Common myeloid progenitor, CD34-positive (primary cell): ENCODE measurements at regions of chr14 and their contacts with region 1.

Region 1: GRCh38 chr14:73759714-73760597 is 45.8 kb upstream of the PNMA1 start:
- DNase-seq: peak; percentile 96 to 99 (median 99)
- H3K4me3 ChIP-seq: peak overlapping the region; percentile 66 to 88 (median 77)
- H3K27ac ChIP-seq: peak overlapping the region; percentile 86 to 99
- H3K4me1 ChIP-seq: peaks cover 29 to 84% (median 78%) of the 10 kb centered on the region in 4 experiments
- H3K27me3 ChIP-seq: no peaks in the 10 kb centered on the region

Region 2: DNA sequence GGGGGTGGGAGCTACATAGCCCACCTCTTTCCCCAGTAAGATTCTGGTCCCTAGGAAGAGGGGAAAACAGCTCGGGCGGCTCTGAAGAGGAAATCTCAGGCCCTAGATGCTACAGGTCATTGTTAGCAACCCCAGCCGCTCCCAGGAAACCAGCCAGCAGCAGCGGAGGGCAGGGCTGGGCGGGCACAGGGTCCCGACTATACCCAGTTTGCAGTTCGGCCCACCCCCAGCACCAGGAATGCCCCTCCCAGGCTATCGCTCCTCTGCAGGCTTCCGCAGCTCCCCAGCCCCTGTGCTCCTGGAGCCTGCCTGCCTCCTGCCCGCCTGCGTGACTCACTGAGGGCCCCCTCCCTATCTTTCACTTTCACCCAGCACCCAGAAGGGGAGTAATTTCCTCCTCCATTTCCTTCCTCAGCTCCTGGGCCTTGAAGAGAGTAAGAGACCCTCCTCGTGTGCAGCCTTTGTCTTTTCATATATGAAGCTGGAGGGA is 18.5 kb before region 1 on chr14:
- CTCF ChIA-PET with region 1: interaction called, 225 read pairs
- POLR2A ChIA-PET with region 1: interaction called, 112 read pairs
- DNase-seq: peak; percentile 96 to 99 (median 97)
- H3K4me3 ChIP-seq: peak overlapping the region in 6 of 7 experiments; percentile 38 to 68 (median 55)
- H3K27ac ChIP-seq: peak overlapping the region; percentile 87 to 99
- H3K4me1 ChIP-seq: peaks cover 23 to 78% (median 77%) of the 10 kb centered on the region in 4 experiments
- H3K27me3 ChIP-seq: no peaks in the 10 kb centered on the region

Region 3: GRCh38 chr14:73771848-73772638 is 12.1 kb after region 1 on chr14:
- CTCF ChIA-PET with region 1: interaction called, 32 read pairs
- POLR2A ChIA-PET with region 1: interaction called, 17 read pairs
- DNase-seq: peak; percentile 55 to 88 (median 78)
- H3K4me3 ChIP-seq: peak overlapping the region in 3 of 7 experiments; percentile 13 to 37 (median 26)
- H3K27ac ChIP-seq: peak overlapping the region in 1 of 2 experiments; percentile 75
- H3K4me1 ChIP-seq: peaks cover 20 to 57% (median 42%) of the 10 kb centered on the region in 4 experiments
- H3K27me3 ChIP-seq: no peaks in the 10 kb centered on the region

Region 4: DNA sequence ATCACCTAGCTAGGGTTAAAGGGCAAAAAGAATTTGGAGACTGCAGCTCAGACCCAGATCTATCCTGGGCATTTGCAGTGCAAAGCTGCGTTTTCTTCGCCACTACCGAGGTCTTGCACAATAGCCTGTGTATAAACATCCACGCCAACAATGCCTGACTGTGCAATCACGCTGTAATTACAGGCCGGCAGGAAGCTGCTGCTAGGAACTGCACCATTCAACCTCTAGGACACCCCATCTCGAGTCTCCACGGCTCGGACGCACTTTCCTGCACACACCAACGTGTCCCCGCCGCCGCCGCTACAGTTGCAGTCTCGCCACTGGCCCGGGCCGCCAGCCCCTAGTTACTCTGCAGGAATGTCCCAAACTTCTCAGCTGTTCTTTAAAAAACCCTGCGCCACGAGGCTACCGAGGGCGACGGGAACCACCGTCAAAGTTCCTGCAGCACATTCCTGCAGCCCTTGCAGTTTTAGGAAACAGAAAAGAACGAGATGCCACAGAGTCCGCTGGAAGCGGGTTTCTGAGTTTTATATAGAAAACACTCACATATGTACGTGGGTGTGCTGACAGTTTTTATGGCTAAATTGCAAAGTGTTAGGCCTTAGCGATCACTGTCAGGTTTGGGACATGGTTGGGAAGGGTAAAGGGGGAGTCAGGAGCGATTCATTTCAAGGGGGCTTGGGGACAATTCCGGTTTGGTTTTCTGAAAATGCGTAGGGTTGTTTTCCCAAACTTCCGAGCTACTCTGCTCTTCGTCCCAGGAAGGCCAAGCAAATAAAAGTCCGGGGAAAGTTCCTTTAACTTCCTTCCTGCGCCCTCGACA is 26.1 kb after region 1 on chr14:
- CTCF ChIA-PET with region 1: interaction called, 30 read pairs
- POLR2A ChIA-PET with region 1: interaction called, 27 read pairs
- DNase-seq: peak; percentile 82 to 93 (median 91)
- H3K4me3 ChIP-seq: peak overlapping the region; percentile 74 to 91 (median 85)
- H3K27ac ChIP-seq: peak overlapping the region; percentile 71 to 94
- H3K4me1 ChIP-seq: peaks cover 30 to 75% (median 51%) of the 10 kb centered on the region in 4 experiments
- H3K27me3 ChIP-seq: no peaks in the 10 kb centered on the region

Region 5: DNA sequence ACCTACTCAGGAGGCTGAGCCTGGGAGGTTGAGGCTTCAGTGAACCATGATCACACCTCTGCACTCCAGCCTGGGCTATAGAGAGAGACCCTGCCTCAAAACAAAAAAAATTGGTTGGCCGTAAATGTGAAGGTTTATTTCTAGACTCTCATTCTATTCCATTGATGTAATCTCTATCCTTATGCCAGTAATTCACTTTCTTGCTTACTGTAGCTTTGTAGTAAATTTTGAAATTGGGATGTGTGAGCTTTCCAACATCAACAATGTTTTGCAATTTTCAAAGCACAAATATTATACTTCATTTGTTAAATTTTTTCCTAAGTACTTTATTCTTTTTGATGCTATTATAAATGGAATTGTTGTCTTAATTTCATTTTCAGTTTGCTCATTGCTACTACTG is 349.4 kb after region 1 on chr14:
- CTCF ChIA-PET with region 1: no interaction called
- POLR2A ChIA-PET with region 1: no interaction called
- DNase-seq: no peak
- H3K4me3 ChIP-seq: no peak overlapping the region
- H3K27ac ChIP-seq: no peak overlapping the region
- H3K4me1 ChIP-seq: no peaks in the 10 kb centered on the region
- H3K27me3 ChIP-seq: no peaks in the 10 kb centered on the region